Ascending aorta (tissue), 2 donors: ENCODE measurements at regions of chr7 and their contacts with region 1.

Region 1: GRCh38 chr7:28096713-28097112 is 83.9 kb downstream of the JAZF1 start:
- DNase-seq: peak in 1 of 2 donors; percentile 76
- H3K4me3 ChIP-seq: no peak overlapping the region
- H3K27ac ChIP-seq: no peak overlapping the region
- H3K4me1 ChIP-seq: peaks cover 0 to 5% of the 10 kb centered on the region in 2 donors
- H3K27me3 ChIP-seq: no peaks in the 10 kb centered on the region
- CTCF ChIP-seq: peak; percentile 79 to 80 (median 79)

Region 2: GRCh38 chr7:28062197-28062991 is 34.3 kb before region 1 on chr7:
- intact Hi-C with region 1: loop called (anchors 2 kb)
- DNase-seq: peak in 1 of 2 donors; percentile 79
- H3K4me3 ChIP-seq: no peak overlapping the region
- H3K27ac ChIP-seq: no peak overlapping the region
- H3K4me1 ChIP-seq: no peaks in the 10 kb centered on the region
- H3K27me3 ChIP-seq: no peaks in the 10 kb centered on the region
- CTCF ChIP-seq: peak in 2 of 3 experiments; percentile 21 to 56

Region 3: GRCh38 chr7:28083164-28083997 is 13.3 kb before region 1 on chr7:
- intact Hi-C with region 1: loop called (anchors 2 kb)
- DNase-seq: peak in 1 of 2 donors; percentile 85
- H3K4me3 ChIP-seq: no peak overlapping the region
- H3K27ac ChIP-seq: peak overlapping the region in 1 of 2 donors; percentile 49
- H3K4me1 ChIP-seq: peaks cover 0 to 25% of the 10 kb centered on the region in 2 donors
- H3K27me3 ChIP-seq: no peaks in the 10 kb centered on the region
- CTCF ChIP-seq: no peak